Panc1 (cell line): ENCODE measurements at regions of chr4 and their contacts with region 1.

Region 1: GRCh38 chr4:52659722-52660261 is 691 bp upstream of the USP46 start:
- DNase-seq: no peak
- ATAC-seq: peak; percentile 52
- H3K4me3 ChIP-seq: peak overlapping the region; percentile 65 to 69
- H3K27ac ChIP-seq: peak overlapping the region; percentile 70
- H3K4me1 ChIP-seq: peaks cover 7% of the 10 kb centered on the region
- H3K27me3 ChIP-seq: no peaks in the 10 kb centered on the region
- CTCF ChIP-seq: no peak

Region 2: GRCh38 chr4:52545099-52546069 is 114.4 kb before region 1 on chr4:
- CTCF ChIA-PET with region 1: no interaction called
- POLR2A ChIA-PET with region 1: no interaction called
- in situ Hi-C with region 1: no loop called
- intact Hi-C with region 1: loop called (anchors 10 kb)
- DNase-seq: peak; percentile 61
- ATAC-seq: peak; percentile 84
- H3K4me3 ChIP-seq: no peak overlapping the region
- H3K27ac ChIP-seq: no peak overlapping the region
- H3K4me1 ChIP-seq: no peaks in the 10 kb centered on the region
- H3K27me3 ChIP-seq: peaks cover 5% of the 10 kb centered on the region; the same call in 1 of the 2 replicates
- CTCF ChIP-seq: peak; percentile 87

Region 3: GRCh38 chr4:52833936-52834525 is 174.2 kb after region 1 on chr4:
- CTCF ChIA-PET with region 1: no interaction called
- POLR2A ChIA-PET with region 1: no interaction called
- in situ Hi-C with region 1: no loop called
- intact Hi-C with region 1: no loop called
- DNase-seq: no peak
- ATAC-seq: no peak
- H3K4me3 ChIP-seq: no peak overlapping the region
- H3K27ac ChIP-seq: no peak overlapping the region
- H3K4me1 ChIP-seq: no peaks in the 10 kb centered on the region
- H3K27me3 ChIP-seq: no peaks in the 10 kb centered on the region
- CTCF ChIP-seq: no peak